ENCODE measurements at regions of chr16 and their contacts with region 1.

Region 1: GRCh38 chr16:80540516-80541272 is at the start of gene DYNLRB2:
- DNase-seq: peak; percentile 90
- ATAC-seq: peak; percentile 92
- H3K4me3 Mint-ChIP-seq: peak within 1 kb of the TSS; percentile 96
- H3K27ac Mint-ChIP-seq: peak within 1 kb of the TSS; percentile 96
- H3K4me1 Mint-ChIP-seq: peaks cover 16% of the 10 kb centered on the region
- H3K27me3 Mint-ChIP-seq: peaks cover 7% of the 10 kb centered on the region
- CTCF ChIP-seq: no peak
- total RNA-seq, gene DYNLRB2: 0.71 TPM in 1 of 2 replicates, not detected in the other

Region 2: GRCh38 chr16:79943736-79944135 is 597.0 kb before region 1 on chr16:
- CTCF ChIA-PET with region 1: no interaction called
- POLR2A ChIA-PET with region 1: no interaction called
- intact Hi-C with region 1: no loop called
- DNase-seq: no peak
- ATAC-seq: no peak
- H3K4me3 Mint-ChIP-seq: no peak overlapping the region
- H3K27ac Mint-ChIP-seq: no peak overlapping the region
- H3K4me1 Mint-ChIP-seq: no peaks in the 10 kb centered on the region
- H3K27me3 Mint-ChIP-seq: peaks cover 2% of the 10 kb centered on the region
- CTCF ChIP-seq: no peak

Region 3: DNA sequence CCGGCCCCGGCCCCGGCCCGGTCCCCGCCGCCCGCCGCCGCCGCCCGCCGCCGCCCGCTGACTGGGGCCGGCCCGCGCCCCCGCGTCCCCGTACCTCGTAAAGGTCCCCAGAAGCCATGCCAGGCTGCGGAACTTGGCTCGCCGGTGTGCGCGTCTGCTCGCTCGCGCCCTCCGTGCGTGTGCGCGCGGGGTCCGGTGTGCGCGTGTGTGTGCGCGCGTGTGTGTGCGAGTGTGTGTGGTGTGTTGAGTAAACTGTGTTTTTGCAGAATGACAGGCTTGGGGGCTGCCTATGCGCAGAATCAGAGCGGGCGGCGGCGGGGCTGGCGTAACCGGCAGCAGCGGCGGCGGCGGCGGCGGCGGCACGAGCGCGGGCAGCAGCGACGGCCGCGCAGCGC is 263.4 kb after region 1 on chr16:
- CTCF ChIA-PET with region 1: no interaction called
- POLR2A ChIA-PET with region 1: no interaction called
- intact Hi-C with region 1: loop called (anchors 1 kb)
- DNase-seq: peak; percentile 42
- ATAC-seq: peak; percentile 54
- H3K4me3 Mint-ChIP-seq: peak overlapping the region; percentile 92
- H3K27ac Mint-ChIP-seq: no peak overlapping the region
- H3K4me1 Mint-ChIP-seq: peaks cover 4% of the 10 kb centered on the region
- H3K27me3 Mint-ChIP-seq: peaks cover 5% of the 10 kb centered on the region
- CTCF ChIP-seq: no peak

Measured in activated B cell treated with CpG ODN at 0.5 μM for 24 hours (primary cell).